PC-3 (cell line): ENCODE measurements at regions of chr14 and their contacts with region 1.

Region 1: DNA sequence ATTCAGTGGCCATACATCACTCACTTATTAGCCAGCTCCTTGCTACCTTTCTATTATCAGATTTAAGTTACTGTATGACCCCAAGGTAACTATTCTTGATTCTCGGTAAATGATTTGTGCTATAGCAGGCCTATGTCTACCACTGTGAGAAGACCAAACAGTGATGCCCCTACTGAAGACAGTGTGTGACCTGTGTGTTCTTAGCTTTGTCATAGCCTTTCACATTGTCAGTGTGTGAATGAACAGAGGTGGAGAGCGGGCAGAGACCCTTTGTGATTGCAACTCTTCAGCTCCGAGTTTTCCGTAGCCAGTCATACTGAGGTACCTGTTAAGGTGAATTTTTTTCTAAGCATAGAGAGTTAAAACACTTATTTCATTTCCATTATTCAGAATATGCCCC is 294.0 kb downstream of the LRFN5 start:
- DNase-seq: no peak
- ATAC-seq: peak; percentile 54
- H3K4me3 ChIP-seq: no peak overlapping the region
- H3K27ac ChIP-seq: peak overlapping the region; percentile 29
- H3K4me1 ChIP-seq: 0 out of 2 replicates have a peak, but pooled peaks cover 7% of the 10 kb centered on the region
- H3K27me3 ChIP-seq: no peaks in the 10 kb centered on the region
- CTCF ChIP-seq: no peak

Region 2: DNA sequence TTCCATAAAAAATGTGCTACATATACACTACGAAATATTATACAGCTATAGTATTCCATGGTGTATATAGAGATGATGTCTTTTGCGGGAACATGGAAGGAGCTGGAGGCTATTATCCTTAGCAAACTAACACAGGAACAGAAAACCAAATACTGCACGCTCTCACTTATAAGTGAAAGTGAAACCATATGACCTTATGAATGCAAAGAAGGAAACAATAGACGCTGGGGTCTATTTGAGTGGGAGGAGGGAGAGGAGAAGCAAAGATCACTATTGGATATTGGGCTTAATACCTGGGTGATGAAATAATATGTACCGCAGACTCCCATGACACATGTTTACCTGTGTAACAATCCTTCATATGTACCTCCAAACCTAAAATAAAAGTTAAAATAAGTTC is 151.2 kb before region 1 on chr14:
- CTCF ChIA-PET with region 1: no interaction called
- POLR2A ChIA-PET with region 1: no interaction called
- intact Hi-C with region 1: loop called (anchors 5 kb)
- DNase-seq: peak; percentile 34
- ATAC-seq: peak; percentile 70
- H3K4me3 ChIP-seq: peak overlapping the region; percentile 59
- H3K27ac ChIP-seq: no peak overlapping the region
- H3K4me1 ChIP-seq: no peaks in the 10 kb centered on the region
- H3K27me3 ChIP-seq: no peaks in the 10 kb centered on the region
- CTCF ChIP-seq: no peak

Region 3: DNA sequence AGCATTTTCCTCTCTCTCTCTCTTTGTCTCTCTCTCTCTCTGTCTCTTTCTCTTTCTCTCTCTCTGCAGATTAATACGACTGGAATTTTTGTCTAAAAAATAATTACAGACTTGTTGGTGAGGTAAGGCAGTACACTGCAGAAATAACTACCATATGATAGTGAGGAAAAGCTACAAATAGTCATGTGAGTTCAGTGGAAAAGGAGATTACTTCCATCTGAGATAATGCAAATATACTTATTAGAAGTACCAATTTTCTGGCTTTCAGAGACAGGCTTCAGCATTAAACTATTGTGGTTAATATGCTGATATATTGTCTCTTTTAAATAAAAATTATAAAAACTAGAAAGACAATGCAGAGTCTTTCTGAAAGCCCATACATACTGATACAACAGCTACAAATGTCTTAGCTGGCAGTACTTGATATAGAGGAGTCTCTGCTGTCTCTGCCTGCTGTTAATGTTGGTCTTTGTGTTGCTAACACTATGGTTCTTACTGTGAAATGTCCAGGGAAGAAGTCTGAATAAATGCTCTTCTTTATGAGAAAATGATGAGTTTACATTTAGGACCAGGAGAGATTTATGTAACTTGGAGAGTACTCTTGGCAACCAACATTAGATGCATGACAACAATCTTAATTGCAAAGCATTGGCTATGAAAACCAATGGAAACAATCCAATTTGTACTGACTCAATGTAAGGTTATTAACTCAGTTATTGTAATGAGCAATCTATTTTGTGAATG is 126.9 kb before region 1 on chr14:
- CTCF ChIA-PET with region 1: no interaction called
- POLR2A ChIA-PET with region 1: no interaction called
- intact Hi-C with region 1: no loop called
- DNase-seq: no peak
- ATAC-seq: no peak
- H3K4me3 ChIP-seq: no peak overlapping the region
- H3K27ac ChIP-seq: no peak overlapping the region
- H3K4me1 ChIP-seq: no peaks in the 10 kb centered on the region
- H3K27me3 ChIP-seq: no peaks in the 10 kb centered on the region
- CTCF ChIP-seq: no peak

Region 4: DNA sequence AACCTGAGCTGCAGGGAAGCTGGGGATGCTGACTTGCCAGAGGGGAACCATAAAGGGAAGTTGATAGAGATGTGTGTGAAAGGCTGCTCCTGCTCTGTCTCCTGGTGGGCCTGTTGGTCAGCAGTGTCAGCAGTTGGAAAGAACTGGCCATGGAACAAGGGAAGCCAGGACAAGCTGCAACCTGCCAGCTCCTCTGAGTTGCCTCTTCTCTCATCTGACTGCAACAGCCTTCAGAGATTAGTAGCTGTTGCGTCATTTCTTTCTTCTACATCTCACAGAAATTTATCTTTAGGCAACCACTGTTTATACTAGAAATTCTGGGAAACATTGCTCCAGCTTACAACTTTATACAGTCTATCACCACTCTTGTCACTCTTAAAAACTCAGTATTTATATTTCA is 70.0 kb before region 1 on chr14:
- CTCF ChIA-PET with region 1: no interaction called
- POLR2A ChIA-PET with region 1: no interaction called
- intact Hi-C with region 1: loop called (anchors 2 kb)
- DNase-seq: no peak
- ATAC-seq: peak; percentile 45
- H3K4me3 ChIP-seq: no peak overlapping the region
- H3K27ac ChIP-seq: no peak overlapping the region
- H3K4me1 ChIP-seq: peaks cover 17% of the 10 kb centered on the region; the same call in 1 of the 2 replicates
- H3K27me3 ChIP-seq: no peaks in the 10 kb centered on the region
- CTCF ChIP-seq: no peak

Region 5: DNA sequence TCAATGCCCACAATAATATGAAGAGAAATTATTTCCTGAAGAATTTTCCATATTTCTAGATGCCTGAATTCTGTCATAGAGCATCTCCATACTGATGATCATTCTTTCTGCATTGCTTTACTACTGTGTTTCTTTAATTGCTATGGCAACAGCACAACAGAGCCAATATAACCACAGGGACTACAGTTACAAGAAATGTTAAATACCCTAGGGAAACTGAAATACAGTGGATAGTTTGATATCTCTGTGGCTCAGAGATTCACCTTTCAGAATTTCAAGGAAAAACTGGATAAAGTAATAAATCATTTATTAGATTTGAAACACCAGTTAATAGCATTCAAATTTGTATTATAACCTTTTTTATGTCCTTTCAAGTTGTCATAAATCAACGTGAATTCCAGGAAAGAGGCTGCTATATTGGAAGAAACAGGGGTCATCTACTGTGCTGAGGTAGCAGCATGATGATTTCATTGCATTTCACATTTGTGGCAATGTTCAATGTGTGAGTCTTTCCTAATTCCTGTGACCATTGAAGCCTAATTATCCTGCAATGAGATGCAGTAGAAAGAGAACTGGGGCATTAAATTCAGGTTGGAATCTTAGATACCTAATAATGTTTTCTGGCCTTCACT is 26.8 kb before region 1 on chr14:
- CTCF ChIA-PET with region 1: no interaction called
- POLR2A ChIA-PET with region 1: no interaction called
- intact Hi-C with region 1: no loop called
- DNase-seq: no peak
- ATAC-seq: no peak
- H3K4me3 ChIP-seq: no peak overlapping the region
- H3K27ac ChIP-seq: no peak overlapping the region
- H3K4me1 ChIP-seq: no peaks in the 10 kb centered on the region
- H3K27me3 ChIP-seq: no peaks in the 10 kb centered on the region
- CTCF ChIP-seq: no peak

Region 6: DNA sequence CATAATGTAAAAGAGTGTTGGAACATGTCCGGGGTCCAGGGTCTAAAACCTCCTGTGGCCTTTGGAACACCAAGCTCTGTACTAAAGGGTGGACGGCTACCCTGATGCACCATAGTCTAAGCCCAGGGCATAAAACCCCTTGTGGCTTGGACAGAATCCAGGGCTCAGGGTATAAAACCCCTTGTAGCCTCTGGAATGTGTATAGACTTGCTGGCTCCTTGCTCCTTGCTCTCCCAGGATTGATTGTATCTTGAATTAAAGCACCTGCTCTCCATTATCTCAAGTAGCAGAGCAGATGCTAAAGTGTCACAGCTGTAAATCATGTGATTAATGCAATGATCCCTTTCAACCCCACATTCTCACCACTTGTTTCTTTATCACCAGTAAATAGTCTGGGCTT is 262.5 kb after region 1 on chr14:
- CTCF ChIA-PET with region 1: no interaction called
- POLR2A ChIA-PET with region 1: no interaction called
- intact Hi-C with region 1: no loop called
- DNase-seq: no peak
- ATAC-seq: no peak
- H3K4me3 ChIP-seq: no peak overlapping the region
- H3K27ac ChIP-seq: no peak overlapping the region
- H3K4me1 ChIP-seq: no peaks in the 10 kb centered on the region
- H3K27me3 ChIP-seq: no peaks in the 10 kb centered on the region
- CTCF ChIP-seq: no peak